OCI-LY7 (cell line): ENCODE measurements at regions of chr5 and their contacts with region 1.

Region 1: DNA sequence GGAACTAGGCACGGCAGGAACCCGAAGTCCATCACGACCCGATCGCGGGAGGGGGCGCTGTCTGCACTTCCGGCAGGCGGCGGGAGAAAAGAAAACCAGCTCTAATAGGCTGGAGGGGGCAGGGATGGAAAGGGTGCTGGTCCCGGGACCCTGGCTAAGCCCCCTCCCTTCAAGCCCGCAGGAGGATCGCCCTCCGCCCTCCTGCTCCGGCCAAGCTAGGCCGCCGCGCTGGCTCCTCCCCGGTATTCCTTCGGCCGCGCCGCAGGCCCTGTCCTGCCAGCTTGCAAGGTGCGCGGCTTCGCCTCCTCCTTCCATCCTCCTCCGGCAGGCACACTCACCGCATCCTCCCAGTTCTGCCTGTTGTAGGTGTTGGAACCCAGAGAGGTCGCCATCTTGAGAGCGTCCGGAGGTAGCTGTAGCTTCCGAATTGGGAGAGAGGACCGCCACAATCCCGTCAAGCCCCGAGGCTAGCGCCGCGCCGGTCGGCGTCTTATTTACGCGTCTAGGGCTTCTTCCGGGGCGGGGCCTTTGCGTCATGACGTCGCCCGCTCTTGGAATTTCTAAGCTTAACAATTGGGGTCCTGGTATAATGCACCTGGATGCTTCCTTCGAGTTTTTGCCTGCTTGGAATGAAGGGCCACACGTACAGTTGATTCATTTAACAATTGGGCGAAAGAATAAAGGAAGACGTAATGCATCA is at the start of gene RBM22:
- DNase-seq: peak; percentile 94
- H3K4me3 ChIP-seq: peak within 1 kb of the TSS; percentile 91
- H3K27ac ChIP-seq: peak within 1 kb of the TSS; percentile 75
- H3K4me1 ChIP-seq: peaks cover 14% of the 10 kb centered on the region
- CTCF ChIP-seq: peak; percentile 82
- total RNA-seq, gene RBM22: 46.7 and 47.9 TPM in 2 replicates

Region 2: GRCh38 chr5:150357326-150358260 is 343.2 kb before region 1 on chr5 and contains the start of gene TCOF1:
- CTCF ChIA-PET with region 1: no interaction called
- POLR2A ChIA-PET with region 1: no interaction called
- intact Hi-C with region 1: loop called (anchors 5 kb)
- DNase-seq: peak; percentile 99
- H3K4me3 ChIP-seq: peak within 1 kb of the TSS; percentile 93
- H3K27ac ChIP-seq: peak within 1 kb of the TSS; percentile 54
- H3K4me1 ChIP-seq: peaks cover 38% of the 10 kb centered on the region
- CTCF ChIP-seq: no peak
- total RNA-seq, gene TCOF1: 61.3 and 62.9 TPM in 2 replicates

Region 3: GRCh38 chr5:150449517-150450339 is 251.0 kb before region 1 on chr5 and contains the start of gene RPS14:
- CTCF ChIA-PET with region 1: no interaction called
- POLR2A ChIA-PET with region 1: no interaction called
- intact Hi-C with region 1: loop called (anchors 2 kb)
- DNase-seq: peak; percentile 94
- H3K4me3 ChIP-seq: peak within 1 kb of the TSS; percentile 97
- H3K27ac ChIP-seq: peak within 1 kb of the TSS; percentile 80
- H3K4me1 ChIP-seq: peaks cover 20% of the 10 kb centered on the region
- CTCF ChIP-seq: peak; percentile 92
- total RNA-seq, gene RPS14: 2,281 and 2,351 TPM in 2 replicates

Region 4: GRCh38 chr5:150560401-150561193 is 140.1 kb before region 1 on chr5:
- CTCF ChIA-PET with region 1: interaction called, 3 read pairs
- POLR2A ChIA-PET with region 1: interaction called, 3 read pairs
- intact Hi-C with region 1: loop called (anchors 5 kb)
- DNase-seq: peak; percentile 87
- H3K4me3 ChIP-seq: no peak overlapping the region
- H3K27ac ChIP-seq: no peak overlapping the region
- H3K4me1 ChIP-seq: peaks cover 26% of the 10 kb centered on the region
- CTCF ChIP-seq: peak; percentile 95

Region 5: GRCh38 chr5:150738862-150739261 is 38.1 kb after region 1 on chr5:
- CTCF ChIA-PET with region 1: no interaction called
- POLR2A ChIA-PET with region 1: no interaction called
- intact Hi-C with region 1: no loop called
- DNase-seq: no peak
- H3K4me3 ChIP-seq: no peak overlapping the region
- H3K27ac ChIP-seq: no peak overlapping the region
- H3K4me1 ChIP-seq: peaks cover 6% of the 10 kb centered on the region
- CTCF ChIP-seq: no peak

Region 6: DNA sequence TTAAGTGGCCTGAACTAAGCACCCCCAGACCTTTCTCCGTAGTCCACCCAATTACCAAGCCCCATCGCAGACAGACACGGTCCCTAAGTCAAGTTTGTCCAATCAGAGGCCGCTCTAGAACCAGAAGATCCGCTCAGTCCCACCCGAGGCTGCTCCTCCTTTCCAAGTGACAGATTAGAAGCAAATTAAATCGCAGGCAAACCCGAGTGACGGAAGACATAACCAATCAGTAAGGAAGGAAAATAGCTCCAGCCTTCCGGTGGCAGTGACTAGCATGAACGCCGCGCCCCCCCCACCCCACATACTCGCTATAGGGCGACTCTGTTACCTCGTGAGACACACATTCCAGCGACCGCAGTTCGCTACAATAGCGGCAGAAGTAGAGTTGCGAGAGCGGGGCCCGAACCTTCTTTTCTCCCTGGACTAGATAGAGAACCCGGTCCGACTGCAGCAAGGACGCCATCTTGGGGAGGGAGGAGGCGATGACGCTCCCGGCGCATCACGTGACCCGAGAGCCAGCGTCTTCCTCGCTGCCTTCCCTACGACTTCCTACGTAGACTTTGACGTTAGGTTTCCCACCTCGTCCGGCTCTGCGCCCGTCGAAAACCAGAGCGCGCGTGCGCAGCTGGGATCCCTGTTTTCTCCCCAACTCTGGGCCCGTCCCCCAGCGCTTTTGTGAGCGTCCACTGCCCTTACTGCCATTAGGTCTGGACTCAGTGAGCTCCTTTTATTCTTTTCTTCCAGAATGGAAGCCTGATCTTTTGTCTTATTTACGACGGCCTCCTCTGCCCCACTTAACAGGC is 58.0 kb after region 1 on chr5 and contains the start of gene DCTN4:
- CTCF ChIA-PET with region 1: no interaction called
- POLR2A ChIA-PET with region 1: interaction called, 7 read pairs
- intact Hi-C with region 1: loop called (anchors 2 kb)
- DNase-seq: peak; percentile 92
- H3K4me3 ChIP-seq: peak within 1 kb of the TSS; percentile 73
- H3K27ac ChIP-seq: peak within 1 kb of the TSS; percentile 70
- H3K4me1 ChIP-seq: peaks cover 8% of the 10 kb centered on the region
- CTCF ChIP-seq: no peak
- total RNA-seq, gene DCTN4: 12.6 and 18.9 TPM in 2 replicates